Testis (tissue), 5 donors: ENCODE measurements at regions of chr6 and their contacts with region 1.

Region 1: DNA sequence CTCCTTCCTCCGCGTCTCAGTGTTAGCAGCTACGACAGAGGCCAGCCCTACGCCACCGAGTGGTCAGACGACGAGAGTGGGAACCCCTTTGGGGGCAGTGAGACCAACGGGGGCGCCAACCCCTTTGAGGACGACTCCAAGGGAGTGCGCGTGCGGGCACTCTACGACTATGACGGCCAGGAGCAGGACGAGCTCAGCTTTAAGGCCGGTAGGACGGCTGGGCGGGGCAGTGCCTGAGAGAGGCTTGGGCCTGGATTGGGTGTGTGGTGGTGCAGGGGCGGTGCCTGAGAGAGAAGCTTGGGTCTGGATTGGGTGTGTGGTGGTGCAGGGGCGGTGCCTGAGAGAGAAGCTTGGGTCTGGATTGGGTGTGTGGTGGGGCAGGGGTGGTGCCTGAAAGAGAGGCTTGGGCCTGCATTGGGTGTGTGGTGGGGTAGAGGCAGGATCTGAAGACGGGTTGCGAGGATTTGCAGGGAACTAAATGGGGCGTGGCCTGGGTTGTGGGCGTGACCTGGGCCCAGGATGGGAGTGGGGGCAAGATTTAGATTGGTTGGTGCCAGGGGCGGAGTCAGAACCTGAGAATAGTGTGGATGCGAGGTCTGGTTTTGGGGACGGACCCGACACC is 24.4 kb downstream of the SPDEF start:
- DNase-seq: peak; percentile 88
- H3K4me3 ChIP-seq: peak overlapping the region; percentile 3 to 40
- H3K27ac ChIP-seq: no peak overlapping the region
- H3K4me1 ChIP-seq: peaks cover under 1% of the 10 kb centered on the region
- H3K27me3 ChIP-seq: no peaks in the 10 kb centered on the region
- CTCF ChIP-seq: no peak
- POLR2A ChIP-seq: no peak

Region 2: GRCh38 chr6:34610819-34611477 is 79.3 kb after region 1 on chr6:
- intact Hi-C with region 1: loop called (anchors 10 kb)
- DNase-seq: no peak
- H3K4me3 ChIP-seq: no peak overlapping the region
- H3K27ac ChIP-seq: no peak overlapping the region
- H3K4me1 ChIP-seq: peaks cover 3% of the 10 kb centered on the region
- H3K27me3 ChIP-seq: no peaks in the 10 kb centered on the region
- CTCF ChIP-seq: no peak
- POLR2A ChIP-seq: no peak